CD8-positive, alpha-beta memory T cell (primary cell): ENCODE measurements at regions of chr13 and their contacts with region 1.

Region 1: GRCh38 chr13:76980075-76980718 is 11.7 kb upstream of the CLN5 start:
- DNase-seq: peak; percentile 75 to 87 (median 83)
- H3K4me3 ChIP-seq: no peak overlapping the region
- H3K4me3 Mint-ChIP-seq: peak overlapping the region in 3 of 7 donors; percentile 13 to 44 (median 34)
- H3K27ac ChIP-seq: no peak overlapping the region
- H3K27ac Mint-ChIP-seq: no peak overlapping the region
- H3K4me1 ChIP-seq: no peaks in the 10 kb centered on the region
- H3K4me1 Mint-ChIP-seq: peaks cover 5 to 21% (median 14%) of the 10 kb centered on the region in 3 donors
- H3K27me3 ChIP-seq: peaks cover 10% of the 10 kb centered on the region
- H3K27me3 Mint-ChIP-seq: peaks cover 20 to 60% of the 10 kb centered on the region in 2 donors

Region 2: GRCh38 chr13:76822698-76823267 is 157.4 kb before region 1 on chr13:
- CTCF ChIA-PET with region 1: no interaction called
- POLR2A ChIA-PET with region 1: no interaction called
- DNase-seq: peak in 1 of 5 donors; percentile 12
- H3K4me3 ChIP-seq: no peak overlapping the region
- H3K4me3 Mint-ChIP-seq: no peak overlapping the region
- H3K27ac ChIP-seq: no peak overlapping the region
- H3K27ac Mint-ChIP-seq: no peak overlapping the region
- H3K4me1 ChIP-seq: no peaks in the 10 kb centered on the region
- H3K4me1 Mint-ChIP-seq: no peaks in the 10 kb centered on the region
- H3K27me3 ChIP-seq: no peaks in the 10 kb centered on the region
- H3K27me3 Mint-ChIP-seq: peaks cover 3 to 15% of the 10 kb centered on the region in 2 donors

Region 3: DNA sequence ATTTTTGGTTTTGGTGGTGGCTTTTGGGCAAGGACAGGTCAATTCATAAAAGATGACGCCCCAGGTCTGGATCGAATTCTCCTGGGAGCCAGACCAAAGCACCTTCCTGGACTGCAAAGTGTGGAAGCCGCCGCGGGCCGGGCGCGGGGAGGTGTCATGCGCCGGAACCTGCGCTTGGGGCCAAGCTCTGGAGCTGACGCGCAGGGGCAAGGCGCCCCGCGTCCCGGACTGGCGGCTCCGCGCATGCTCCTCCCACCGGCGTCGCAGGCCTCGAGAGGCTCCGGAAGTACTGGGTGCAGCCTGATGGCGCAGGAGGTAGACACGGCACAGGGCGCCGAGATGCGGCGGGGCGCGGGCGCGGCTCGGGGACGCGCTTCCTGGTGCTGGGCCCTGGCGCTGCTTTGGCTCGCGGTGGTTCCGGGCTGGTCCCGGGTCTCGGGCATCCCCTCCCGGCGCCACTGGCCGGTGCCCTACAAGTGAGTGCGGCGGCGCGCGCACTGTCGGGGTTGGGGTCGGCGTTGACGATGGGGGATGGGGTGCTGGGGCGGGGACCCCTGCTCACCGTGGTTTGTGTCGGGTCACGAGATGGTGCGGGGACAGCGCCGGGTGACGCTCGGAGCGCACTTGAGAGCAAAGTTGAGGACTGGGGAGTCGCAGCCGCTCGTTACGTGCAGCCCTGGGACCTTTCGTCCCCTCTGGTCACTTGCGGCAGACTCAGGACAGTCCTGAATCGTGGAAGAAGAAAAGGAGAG is 11.8 kb after region 1 on chr13 and contains the start of gene CLN5:
- CTCF ChIA-PET with region 1: interaction called, 71 read pairs
- POLR2A ChIA-PET with region 1: interaction called, 7 read pairs
- DNase-seq: peak; percentile 93 to 97 (median 96)
- H3K4me3 ChIP-seq: peak within 1 kb of the TSS; percentile 91
- H3K4me3 Mint-ChIP-seq: peak within 1 kb of the TSS; percentile 90 to 98 (median 95)
- H3K27ac ChIP-seq: peak within 1 kb of the TSS; percentile 96
- H3K27ac Mint-ChIP-seq: peak within 1 kb of the TSS; percentile 98 to 100 (median 100)
- H3K4me1 ChIP-seq: peaks cover 31% of the 10 kb centered on the region
- H3K4me1 Mint-ChIP-seq: peaks cover 40 to 57% (median 44%) of the 10 kb centered on the region in 3 donors
- H3K27me3 ChIP-seq: peaks cover 14% of the 10 kb centered on the region
- H3K27me3 Mint-ChIP-seq: peaks cover 12 to 15% of the 10 kb centered on the region in 2 donors
- total RNA-seq, gene CLN5: 14.0 to 15.9 TPM

Region 4: GRCh38 chr13:77002590-77003190 is 22.5 kb after region 1 on chr13:
- CTCF ChIA-PET with region 1: interaction called, 21 read pairs
- POLR2A ChIA-PET with region 1: no interaction called
- DNase-seq: no peak
- H3K4me3 ChIP-seq: no peak overlapping the region
- H3K4me3 Mint-ChIP-seq: no peak overlapping the region
- H3K27ac ChIP-seq: no peak overlapping the region
- H3K27ac Mint-ChIP-seq: peak overlapping the region in 3 of 8 donors; percentile 15 to 37 (median 19)
- H3K4me1 ChIP-seq: no peaks in the 10 kb centered on the region
- H3K4me1 Mint-ChIP-seq: peaks cover 10 to 44% (median 35%) of the 10 kb centered on the region in 3 donors
- H3K27me3 ChIP-seq: no peaks in the 10 kb centered on the region
- H3K27me3 Mint-ChIP-seq: no peaks in the 10 kb centered on the region